ENCODE measurements at regions of chr19 and their contacts with region 1.

Region 1: DNA sequence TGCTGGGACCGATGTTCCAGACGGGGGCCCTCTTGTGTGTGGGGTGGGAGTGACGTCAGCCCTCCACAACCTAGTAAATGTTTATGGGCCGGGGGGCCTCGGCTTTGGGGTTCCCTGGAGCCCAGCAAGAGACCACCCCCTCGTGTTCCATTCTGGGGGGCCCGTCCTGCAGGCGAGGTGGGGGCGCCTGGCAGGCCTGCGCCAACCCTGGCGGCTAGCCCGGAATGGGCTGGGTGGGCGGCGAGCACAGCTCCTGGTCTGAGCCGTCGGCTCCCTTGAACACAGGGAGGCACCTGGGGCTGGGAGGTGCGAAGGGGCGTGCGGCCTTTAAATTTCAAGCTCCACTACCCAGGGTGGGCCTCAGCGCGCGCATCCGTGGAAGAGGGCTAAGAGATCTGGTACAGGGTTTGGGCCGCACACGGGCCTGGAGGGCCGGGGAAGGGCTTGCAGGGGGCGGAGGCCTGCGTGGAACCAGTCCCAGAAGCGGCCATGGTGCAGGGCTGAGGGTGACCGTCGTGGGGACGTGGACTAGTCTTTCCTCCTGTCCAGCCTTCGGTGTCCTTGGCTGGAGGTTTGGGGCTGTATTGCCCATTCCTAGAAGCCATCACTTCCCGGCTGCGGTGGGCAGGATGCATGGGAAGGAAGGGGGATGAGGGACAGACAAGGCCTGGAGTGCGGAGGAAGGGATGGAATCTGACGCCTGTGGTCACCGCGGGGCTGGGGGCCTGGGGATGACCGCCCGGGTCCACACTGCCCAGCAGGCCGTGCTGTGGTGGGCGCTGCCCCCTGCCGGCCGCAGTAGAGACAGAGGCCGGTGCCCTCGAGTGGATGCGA is 11.4 kb downstream of the NDUFA11 start:
- DNase-seq: peak in 1 of 2 donors; percentile 57
- ATAC-seq: peak in 7 of 8 donors; percentile 29 to 61 (median 44)
- H3K4me3 ChIP-seq: no peak overlapping the region
- H3K27ac ChIP-seq: peak overlapping the region in 1 of 10 donors; percentile 90
- H3K4me1 ChIP-seq: peaks cover 9 to 56% (median 33%) of the 10 kb centered on the region in 9 donors
- H3K27me3 ChIP-seq: peaks cover 0 to 18% (median 10%) of the 10 kb centered on the region in 7 donors
- CTCF ChIP-seq: peak; percentile 51 to 69 (median 66)

Region 2: GRCh38 chr19:5686647-5687359 is 205.4 kb before region 1 on chr19:
- intact Hi-C with region 1: no loop called
- DNase-seq: peak; percentile 97 to 100
- ATAC-seq: peak; percentile 76 to 85 (median 80)
- H3K4me3 ChIP-seq: peak overlapping the region; percentile 30 to 81 (median 63)
- H3K27ac ChIP-seq: peak overlapping the region in 9 of 10 donors; percentile 64 to 85 (median 75)
- H3K4me1 ChIP-seq: peaks cover 1 to 30% (median 23%) of the 10 kb centered on the region in 9 donors
- H3K27me3 ChIP-seq: no peaks in the 10 kb centered on the region
- CTCF ChIP-seq: peak; percentile 72 to 90 (median 86)

Region 3: GRCh38 chr19:5803752-5804515 is 88.2 kb before region 1 on chr19:
- intact Hi-C with region 1: loop called (anchors 1 to 10 kb)
- DNase-seq: peak; percentile 85 to 88
- ATAC-seq: peak; percentile 79 to 94 (median 88)
- H3K4me3 ChIP-seq: peak overlapping the region in 8 of 10 donors; percentile 11 to 49 (median 35)
- H3K27ac ChIP-seq: no peak overlapping the region
- H3K4me1 ChIP-seq: peaks cover 3 to 47% (median 14%) of the 10 kb centered on the region in 9 donors
- H3K27me3 ChIP-seq: peaks cover 0 to 75% (median 46%) of the 10 kb centered on the region in 7 donors
- CTCF ChIP-seq: peak; percentile 64 to 95 (median 86)

Region 4: DNA sequence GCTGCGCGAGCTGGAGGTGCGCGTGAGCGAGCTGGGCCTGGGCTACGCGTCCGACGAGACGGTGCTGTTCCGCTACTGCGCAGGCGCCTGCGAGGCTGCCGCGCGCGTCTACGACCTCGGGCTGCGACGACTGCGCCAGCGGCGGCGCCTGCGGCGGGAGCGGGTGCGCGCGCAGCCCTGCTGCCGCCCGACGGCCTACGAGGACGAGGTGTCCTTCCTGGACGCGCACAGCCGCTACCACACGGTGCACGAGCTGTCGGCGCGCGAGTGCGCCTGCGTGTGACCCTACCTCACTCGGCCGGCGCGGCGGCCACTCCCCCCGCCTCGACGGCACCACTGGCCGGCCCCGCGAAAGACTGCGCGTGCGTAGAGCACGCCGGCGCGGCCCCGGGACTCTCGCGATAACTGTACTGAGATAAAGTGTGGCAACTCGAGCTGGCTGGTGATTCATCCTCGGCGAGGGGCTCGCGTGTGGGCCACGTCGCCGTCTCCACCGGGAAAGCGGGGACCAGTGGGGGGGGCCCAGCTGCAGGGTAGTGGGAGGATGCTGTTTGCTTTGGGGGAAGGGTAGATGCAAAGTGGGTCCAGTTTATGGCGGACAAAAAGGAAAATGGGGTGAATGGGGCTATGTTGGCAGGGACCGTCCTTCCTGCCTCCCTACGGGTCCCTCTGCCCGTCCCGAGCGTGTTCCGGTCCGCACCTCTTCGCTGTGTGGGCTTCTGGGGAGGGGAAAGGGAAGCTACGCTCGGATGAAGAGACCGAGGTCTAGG is 64.1 kb before region 1 on chr19:
- intact Hi-C with region 1: loop called in 3 of 10 experiments (anchors 5 to 10 kb)
- DNase-seq: peak; percentile 81 to 84
- ATAC-seq: peak; percentile 72 to 84 (median 82)
- H3K4me3 ChIP-seq: peak overlapping the region; percentile 6 to 63 (median 39)
- H3K27ac ChIP-seq: peak overlapping the region in 9 of 10 donors; percentile 50 to 89 (median 75)
- H3K4me1 ChIP-seq: peaks cover 0 to 25% (median 3%) of the 10 kb centered on the region in 9 donors
- H3K27me3 ChIP-seq: peaks cover 0 to 39% (median 27%) of the 10 kb centered on the region in 7 donors
- CTCF ChIP-seq: no peak

Region 5: DNA sequence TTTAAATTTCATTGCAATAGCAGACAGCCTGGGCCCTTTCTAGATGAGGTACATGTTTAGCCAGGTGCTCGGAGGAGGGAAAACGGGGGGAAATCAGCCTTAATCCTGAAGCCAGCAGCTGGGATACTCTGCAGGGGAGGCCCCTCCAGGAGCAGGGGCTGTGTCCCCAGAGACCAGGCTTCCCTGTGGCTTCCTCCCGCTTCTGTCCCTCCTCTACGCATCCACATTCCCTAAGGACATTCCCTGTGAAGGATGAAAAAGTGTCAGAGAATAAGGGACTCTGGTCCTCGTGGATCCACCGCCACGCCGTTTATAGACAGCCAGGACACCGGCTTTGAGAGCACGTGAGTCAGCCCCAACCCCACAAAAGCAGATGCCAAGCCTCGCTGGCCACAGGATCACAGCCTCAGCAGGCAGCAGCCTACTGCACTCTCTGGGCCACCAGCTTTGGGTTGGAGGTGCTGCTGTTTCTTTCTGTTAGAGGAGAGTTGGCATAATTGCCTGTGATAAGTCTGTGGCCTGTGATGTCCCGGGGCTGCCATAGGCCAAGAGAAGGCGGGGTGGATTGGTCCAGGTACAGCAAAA is 122.5 kb after region 1 on chr19:
- intact Hi-C with region 1: no loop called
- DNase-seq: no peak
- ATAC-seq: no peak
- H3K4me3 ChIP-seq: no peak overlapping the region
- H3K27ac ChIP-seq: no peak overlapping the region
- H3K4me1 ChIP-seq: no peaks in the 10 kb centered on the region
- H3K27me3 ChIP-seq: no peaks in the 10 kb centered on the region
- CTCF ChIP-seq: no peak